ENCODE measurements at regions of chr7 and their contacts with region 1.

Region 1: DNA sequence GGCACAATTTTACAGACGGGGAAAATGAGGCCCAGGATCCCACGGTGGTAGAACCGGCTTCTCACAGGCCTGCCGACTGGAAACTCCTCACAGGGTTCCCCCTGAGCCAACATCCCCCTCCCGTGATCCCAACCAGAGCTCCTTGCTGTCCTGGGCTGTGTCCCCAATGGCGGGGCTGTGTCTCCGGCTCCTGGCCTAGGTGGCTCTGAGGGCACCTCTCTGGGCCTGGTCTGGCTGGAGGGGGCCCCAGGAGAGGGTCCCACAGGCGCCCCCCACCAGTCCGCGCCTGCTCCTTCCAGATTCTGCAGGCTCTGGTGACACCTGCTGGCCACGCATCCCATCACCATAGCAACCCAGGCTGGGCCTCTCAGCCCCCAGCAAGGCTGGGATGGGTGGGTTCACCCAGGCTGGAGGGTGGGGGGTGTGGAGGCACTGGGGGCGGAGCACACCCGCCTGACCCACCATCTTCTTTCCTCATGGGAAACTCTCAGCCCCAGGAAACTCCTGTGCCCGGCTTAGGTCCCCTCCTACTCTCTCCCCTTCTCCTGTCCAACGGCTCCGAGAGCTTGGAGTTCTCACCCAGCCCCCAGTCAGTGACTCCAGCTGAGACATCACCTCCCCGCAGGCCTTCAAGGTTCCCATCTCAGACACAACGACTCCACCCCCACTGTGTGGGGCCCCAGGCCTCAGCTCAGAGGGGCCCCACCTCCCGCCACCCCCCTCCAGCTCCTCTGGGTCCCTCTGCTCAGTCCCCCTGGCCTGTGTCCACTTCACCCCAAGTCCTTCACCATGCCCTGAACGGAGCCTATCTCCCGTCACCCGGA is 27.1 kb upstream of the TNRC18 start:
- DNase-seq: peak in 4 of 5 donors; percentile 54 to 62 (median 59)
- ATAC-seq: peak; percentile 70 to 82 (median 76)
- H3K4me3 ChIP-seq: no peak overlapping the region
- H3K27ac ChIP-seq: no peak overlapping the region
- H3K4me1 ChIP-seq: peaks cover 0 to 10% (median 0%) of the 10 kb centered on the region in 12 donors
- H3K27me3 ChIP-seq: no peaks in the 10 kb centered on the region
- CTCF ChIP-seq: peak; percentile 56 to 82 (median 72)
- POLR2A ChIP-seq: no peak

Region 2: DNA sequence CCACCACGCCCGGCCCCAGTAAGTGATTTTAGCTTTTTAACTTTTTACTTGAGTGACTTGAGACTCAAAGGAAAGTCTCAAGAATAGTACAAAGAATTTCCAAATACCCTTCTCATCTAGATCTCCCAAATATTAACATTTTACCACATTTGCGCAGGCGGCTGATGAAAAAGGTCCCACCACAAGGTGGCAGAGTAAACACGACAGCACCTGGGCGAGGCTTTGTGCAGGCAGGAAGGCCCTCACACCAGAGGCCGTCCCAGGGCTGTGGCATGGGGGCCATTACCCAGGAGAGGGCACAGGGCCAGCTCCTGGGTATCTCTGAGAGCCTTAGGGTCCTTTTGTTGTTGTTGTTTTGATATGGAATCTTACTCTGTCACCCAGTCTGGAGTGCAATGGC is 310.8 kb before region 1 on chr7:
- intact Hi-C with region 1: loop called in 2 of 10 experiments (anchors 5 kb)
- DNase-seq: no peak
- ATAC-seq: peak in 2 of 4 donors; percentile 45 to 52
- H3K4me3 ChIP-seq: no peak overlapping the region
- H3K27ac ChIP-seq: no peak overlapping the region
- H3K4me1 ChIP-seq: no peaks in the 10 kb centered on the region
- H3K27me3 ChIP-seq: peaks cover 0 to 13% (median 0%) of the 10 kb centered on the region in 9 donors
- CTCF ChIP-seq: peak in 10 of 12 donors; percentile 18 to 47 (median 35)
- POLR2A ChIP-seq: no peak

Region 3: DNA sequence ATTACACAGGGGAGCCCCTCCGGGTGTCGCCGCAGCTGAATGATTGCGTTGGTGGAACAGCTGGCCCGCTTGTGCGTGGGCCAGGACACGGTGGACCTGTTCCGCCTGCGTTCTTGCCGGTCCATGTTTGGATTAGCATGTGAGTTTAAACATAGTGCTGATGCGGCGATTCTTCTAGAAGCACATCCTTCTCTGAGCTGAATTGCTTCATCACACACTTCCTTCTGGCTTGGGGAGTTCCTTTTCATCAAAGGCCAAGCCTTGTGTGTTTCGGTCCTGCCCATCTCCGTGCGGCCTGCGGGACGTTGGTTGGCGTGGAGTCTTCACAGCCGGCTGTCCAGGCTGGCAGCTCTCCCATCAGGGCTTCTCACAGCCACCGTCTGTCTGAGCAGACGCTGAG is 213.5 kb before region 1 on chr7:
- intact Hi-C with region 1: loop called (anchors 2 to 10 kb)
- DNase-seq: peak; percentile 59 to 87 (median 75)
- ATAC-seq: peak; percentile 56 to 78 (median 64)
- H3K4me3 ChIP-seq: peak overlapping the region in 7 of 12 donors; percentile 2 to 35 (median 19)
- H3K27ac ChIP-seq: peak overlapping the region in 4 of 12 donors; percentile 34 to 81 (median 40)
- H3K4me1 ChIP-seq: peaks cover 0 to 49% (median 5%) of the 10 kb centered on the region in 12 donors
- H3K27me3 ChIP-seq: no peaks in the 10 kb centered on the region
- CTCF ChIP-seq: no peak
- POLR2A ChIP-seq: no peak

Region 4: DNA sequence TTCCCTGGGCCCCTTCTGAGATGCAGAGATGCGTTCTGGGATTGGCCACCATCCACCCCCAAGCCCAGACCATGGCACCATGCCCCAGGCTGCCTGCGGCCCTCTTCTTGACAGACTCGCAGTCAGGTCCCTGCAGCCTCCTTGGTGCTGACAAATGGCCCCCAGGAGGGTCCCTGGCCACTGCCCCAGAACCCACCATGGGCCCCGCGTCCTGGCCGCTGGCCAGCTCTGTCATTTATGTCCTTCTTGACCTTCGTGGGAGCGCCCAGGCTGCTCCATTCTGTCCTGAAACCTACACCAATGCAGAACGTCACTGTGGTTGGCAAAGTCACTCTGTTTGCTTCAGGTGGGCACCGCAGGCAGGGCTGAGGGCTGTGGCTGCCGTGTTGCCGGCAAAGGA is 207.5 kb before region 1 on chr7:
- intact Hi-C with region 1: loop called (anchors 2 to 10 kb)
- DNase-seq: no peak
- ATAC-seq: no peak
- H3K4me3 ChIP-seq: no peak overlapping the region
- H3K27ac ChIP-seq: no peak overlapping the region
- H3K4me1 ChIP-seq: peaks cover 0 to 17% (median 5%) of the 10 kb centered on the region in 12 donors
- H3K27me3 ChIP-seq: no peaks in the 10 kb centered on the region
- CTCF ChIP-seq: no peak
- POLR2A ChIP-seq: no peak

Region 5: GRCh38 chr7:5248201-5248885 is 202.4 kb before region 1 on chr7:
- intact Hi-C with region 1: loop called in 9 of 10 experiments (anchors 5 to 10 kb)
- DNase-seq: peak; percentile 63 to 81 (median 77)
- ATAC-seq: peak in 3 of 4 donors; percentile 71 to 89 (median 88)
- H3K4me3 ChIP-seq: peak overlapping the region in 1 of 12 donors; percentile 10
- H3K27ac ChIP-seq: peak overlapping the region in 3 of 12 donors; percentile 5 to 57 (median 14)
- H3K4me1 ChIP-seq: peaks cover 0 to 4% (median 0%) of the 10 kb centered on the region in 12 donors
- H3K27me3 ChIP-seq: peaks cover 0 to 4% (median 0%) of the 10 kb centered on the region in 9 donors
- CTCF ChIP-seq: no peak
- POLR2A ChIP-seq: no peak

Region 6: DNA sequence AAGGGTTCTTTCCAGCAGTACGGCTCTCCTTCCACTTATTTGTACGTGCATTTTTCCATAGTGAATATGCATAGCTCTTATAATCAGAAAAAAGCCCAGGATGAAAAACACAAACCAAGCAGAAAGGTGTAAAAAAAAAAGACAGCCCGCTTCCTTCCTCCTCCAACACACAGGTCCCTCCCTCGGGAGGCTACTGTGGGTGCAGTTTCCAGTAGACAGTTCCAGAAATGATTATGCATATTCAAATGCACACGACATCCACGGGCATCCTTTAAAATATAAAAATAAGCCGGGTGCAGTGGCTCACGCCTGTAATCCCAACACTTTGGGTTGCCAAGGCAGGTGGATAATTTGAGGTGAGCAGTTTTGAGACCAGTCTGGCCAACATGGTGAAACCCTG is 87.0 kb before region 1 on chr7:
- intact Hi-C with region 1: loop called (anchors 1 to 5 kb)
- DNase-seq: no peak
- ATAC-seq: no peak
- H3K4me3 ChIP-seq: no peak overlapping the region
- H3K27ac ChIP-seq: no peak overlapping the region
- H3K4me1 ChIP-seq: peaks cover 0 to 14% (median 8%) of the 10 kb centered on the region in 12 donors
- H3K27me3 ChIP-seq: no peaks in the 10 kb centered on the region
- CTCF ChIP-seq: no peak
- POLR2A ChIP-seq: no peak

Region 7: GRCh38 chr7:5382281-5382892 is 68.4 kb before region 1 on chr7:
- intact Hi-C with region 1: no loop called
- DNase-seq: no peak
- ATAC-seq: peak in 3 of 4 donors; percentile 22 to 27 (median 23)
- H3K4me3 ChIP-seq: peak overlapping the region in 1 of 12 donors; percentile 15
- H3K27ac ChIP-seq: no peak overlapping the region
- H3K4me1 ChIP-seq: peaks cover 0 to 53% (median 30%) of the 10 kb centered on the region in 12 donors
- H3K27me3 ChIP-seq: no peaks in the 10 kb centered on the region
- CTCF ChIP-seq: no peak
- POLR2A ChIP-seq: no peak

Region 8: GRCh38 chr7:5500056-5500776 is 49.5 kb after region 1 on chr7:
- intact Hi-C with region 1: no loop called
- DNase-seq: no peak
- ATAC-seq: no peak
- H3K4me3 ChIP-seq: no peak overlapping the region
- H3K27ac ChIP-seq: no peak overlapping the region
- H3K4me1 ChIP-seq: peaks cover 0 to 21% (median 11%) of the 10 kb centered on the region in 12 donors
- H3K27me3 ChIP-seq: no peaks in the 10 kb centered on the region
- CTCF ChIP-seq: no peak
- POLR2A ChIP-seq: no peak